Activated B cell treated with CpG ODN at 0.5 μM for 24 hours (primary cell): ENCODE measurements at regions of chr2 and their contacts with region 1.

Region 1: DNA sequence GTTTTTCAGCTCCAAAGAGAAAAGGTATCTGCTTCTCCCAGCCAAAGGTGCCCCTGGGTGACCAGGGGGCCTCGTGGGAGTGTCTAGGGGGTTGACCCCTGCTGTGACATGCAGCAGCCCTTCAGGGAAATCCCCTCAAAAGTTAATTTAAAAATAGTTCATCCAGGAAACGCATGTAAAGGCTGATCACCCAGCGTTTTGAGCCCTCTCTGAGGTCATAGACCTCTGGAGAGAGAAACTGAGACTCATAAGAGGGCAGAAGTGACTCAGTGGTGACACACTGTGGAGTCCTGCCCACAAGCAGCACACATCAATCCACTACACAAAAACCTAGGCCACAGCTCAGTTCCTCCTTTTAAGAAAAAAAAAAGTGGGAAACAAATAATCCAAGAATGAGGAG is 11.9 kb downstream of the GAL3ST2 start:
- DNase-seq: peak; percentile 23
- ATAC-seq: peak; percentile 87
- H3K4me3 Mint-ChIP-seq: peak overlapping the region; percentile 45
- H3K27ac Mint-ChIP-seq: peak overlapping the region; percentile 79
- H3K4me1 Mint-ChIP-seq: peaks cover 35% of the 10 kb centered on the region
- H3K27me3 Mint-ChIP-seq: no peaks in the 10 kb centered on the region
- CTCF ChIP-seq: no peak

Region 2: GRCh38 chr2:241443486-241444223 is 344.9 kb before region 1 on chr2:
- CTCF ChIA-PET with region 1: no interaction called
- POLR2A ChIA-PET with region 1: interaction called, 11 read pairs
- intact Hi-C with region 1: no loop called
- DNase-seq: peak; percentile 48
- ATAC-seq: peak; percentile 76
- H3K4me3 Mint-ChIP-seq: peak overlapping the region; percentile 12
- H3K27ac Mint-ChIP-seq: no peak overlapping the region
- H3K4me1 Mint-ChIP-seq: peaks cover 18% of the 10 kb centered on the region
- H3K27me3 Mint-ChIP-seq: peaks cover 2% of the 10 kb centered on the region
- CTCF ChIP-seq: no peak

Region 3: DNA sequence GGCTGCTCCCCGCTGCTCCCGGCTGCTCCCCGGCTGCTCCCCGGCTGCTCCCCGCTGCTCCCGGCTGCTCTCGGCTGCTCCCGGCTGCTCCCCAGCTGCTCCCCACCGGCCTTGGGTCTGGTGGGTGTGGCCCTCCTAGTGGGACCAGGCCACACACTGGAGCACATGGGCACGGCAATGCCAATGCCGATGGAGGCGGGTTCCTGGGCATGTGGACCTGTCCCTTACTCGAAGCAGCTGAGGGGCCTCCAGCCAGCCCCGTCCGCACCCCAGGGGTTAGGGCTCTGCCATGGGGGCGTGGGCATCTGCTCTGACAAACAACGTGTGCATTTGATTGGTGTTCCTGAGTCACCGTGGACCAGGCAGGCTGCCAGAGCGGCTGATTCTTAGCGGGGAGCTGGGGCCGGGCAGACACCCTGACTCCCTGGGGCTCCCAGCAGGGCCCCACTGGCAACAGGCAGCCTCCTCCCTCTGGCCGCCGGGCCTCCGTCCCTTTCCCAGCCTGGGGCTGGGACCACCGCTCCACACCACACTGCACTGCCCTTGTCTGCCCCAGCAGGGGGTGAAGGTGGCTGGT is 13.8 kb before region 1 on chr2:
- CTCF ChIA-PET with region 1: no interaction called
- POLR2A ChIA-PET with region 1: interaction called, 7 read pairs
- intact Hi-C with region 1: loop called (anchors 1 kb)
- DNase-seq: no peak
- ATAC-seq: no peak
- H3K4me3 Mint-ChIP-seq: no peak overlapping the region
- H3K27ac Mint-ChIP-seq: no peak overlapping the region
- H3K4me1 Mint-ChIP-seq: peaks cover 14% of the 10 kb centered on the region
- H3K27me3 Mint-ChIP-seq: no peaks in the 10 kb centered on the region
- CTCF ChIP-seq: no peak

Region 4: DNA sequence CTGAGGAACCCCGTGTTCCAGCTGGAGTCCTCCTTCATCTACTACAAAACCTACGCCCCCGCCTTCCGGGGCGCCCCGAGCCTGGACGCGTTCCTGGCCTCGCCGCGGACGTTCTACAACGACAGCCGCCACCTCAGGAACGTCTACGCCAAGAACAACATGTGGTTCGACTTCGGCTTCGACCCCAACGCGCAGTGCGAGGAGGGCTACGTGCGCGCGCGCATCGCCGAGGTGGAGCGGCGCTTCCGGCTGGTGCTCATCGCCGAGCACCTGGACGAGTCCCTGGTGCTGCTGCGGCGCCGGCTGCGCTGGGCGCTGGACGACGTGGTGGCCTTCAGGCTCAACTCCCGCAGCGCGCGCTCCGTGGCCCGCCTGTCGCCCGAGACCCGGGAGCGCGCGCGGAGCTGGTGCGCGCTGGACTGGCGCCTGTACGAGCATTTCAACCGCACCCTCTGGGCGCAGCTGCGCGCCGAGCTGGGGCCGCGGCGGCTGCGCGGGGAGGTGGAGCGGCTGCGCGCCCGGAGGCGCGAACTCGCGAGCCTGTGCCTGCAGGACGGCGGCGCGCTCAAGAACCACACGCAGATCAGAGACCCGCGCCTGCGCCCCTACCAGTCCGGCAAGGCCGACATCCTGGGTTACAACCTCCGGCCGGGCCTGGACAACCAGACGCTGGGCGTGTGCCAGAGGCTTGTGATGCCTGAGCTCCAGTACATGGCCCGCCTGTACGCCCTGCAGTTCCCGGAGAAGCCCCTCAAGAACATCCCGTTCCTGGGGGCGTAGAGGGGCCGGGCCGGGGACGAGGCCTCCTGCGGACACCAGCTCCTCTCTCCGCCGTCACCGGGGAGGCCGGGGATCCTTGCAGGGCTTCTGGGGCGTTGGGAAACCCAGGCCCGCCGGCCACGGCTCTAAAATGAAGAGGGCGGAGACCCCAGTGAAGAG is 15.1 kb after region 1 on chr2:
- CTCF ChIA-PET with region 1: no interaction called
- POLR2A ChIA-PET with region 1: interaction called, 5 read pairs
- intact Hi-C with region 1: loop called (anchors 2 kb)
- DNase-seq: peak; percentile 45
- ATAC-seq: peak; percentile 62
- H3K4me3 Mint-ChIP-seq: peak overlapping the region; percentile 62
- H3K27ac Mint-ChIP-seq: no peak overlapping the region
- H3K4me1 Mint-ChIP-seq: peaks cover 17% of the 10 kb centered on the region
- H3K27me3 Mint-ChIP-seq: peaks cover 6% of the 10 kb centered on the region
- CTCF ChIP-seq: no peak

Region 5: DNA sequence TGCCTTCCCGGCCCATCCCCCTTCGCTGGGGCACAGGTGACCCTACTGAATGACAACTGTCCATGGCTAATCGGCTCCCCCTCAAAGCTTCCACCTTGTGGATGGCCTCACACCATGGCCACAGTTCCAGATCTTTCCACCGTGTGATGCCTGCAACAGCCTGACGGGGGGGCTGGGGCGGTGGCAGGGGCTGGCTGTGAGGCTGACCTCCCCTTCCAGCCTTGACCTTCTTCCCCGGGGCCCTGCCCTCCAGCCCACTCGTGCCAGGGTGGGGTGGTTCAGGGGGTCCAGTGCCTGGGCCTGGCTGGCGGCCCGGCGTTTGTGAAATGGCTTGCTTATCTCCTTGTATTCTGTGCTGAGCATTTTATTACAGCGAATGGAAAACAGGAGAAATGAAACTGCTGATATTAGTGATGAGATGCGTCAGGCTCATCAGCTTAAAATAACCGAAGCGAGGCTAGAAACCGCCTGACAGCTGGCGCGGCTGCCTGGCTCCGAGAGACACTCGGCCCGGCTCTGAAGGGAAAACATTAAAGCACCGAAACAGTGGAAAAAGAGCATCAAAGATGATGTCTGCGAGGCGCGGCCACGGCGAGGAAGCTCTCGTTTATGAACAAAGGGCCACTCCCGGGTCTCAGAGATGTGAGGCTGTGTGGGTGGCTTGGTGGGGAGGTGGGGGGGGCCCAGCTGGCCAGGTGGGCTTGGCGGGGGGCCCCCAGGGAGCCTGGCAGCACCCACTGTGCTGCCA is 71.0 kb after region 1 on chr2:
- CTCF ChIA-PET with region 1: no interaction called
- POLR2A ChIA-PET with region 1: interaction called, 8 read pairs
- intact Hi-C with region 1: loop called (anchors 1 kb)
- DNase-seq: peak; percentile 55
- ATAC-seq: peak; percentile 62
- H3K4me3 Mint-ChIP-seq: peak overlapping the region; percentile 79
- H3K27ac Mint-ChIP-seq: peak overlapping the region; percentile 91
- H3K4me1 Mint-ChIP-seq: peaks cover 41% of the 10 kb centered on the region
- H3K27me3 Mint-ChIP-seq: peaks cover 26% of the 10 kb centered on the region
- CTCF ChIP-seq: no peak